Left ventricle myocardium superior (tissue), 1 donor: ENCODE measurements at regions of chr1 and their contacts with region 1.

Region 1: DNA sequence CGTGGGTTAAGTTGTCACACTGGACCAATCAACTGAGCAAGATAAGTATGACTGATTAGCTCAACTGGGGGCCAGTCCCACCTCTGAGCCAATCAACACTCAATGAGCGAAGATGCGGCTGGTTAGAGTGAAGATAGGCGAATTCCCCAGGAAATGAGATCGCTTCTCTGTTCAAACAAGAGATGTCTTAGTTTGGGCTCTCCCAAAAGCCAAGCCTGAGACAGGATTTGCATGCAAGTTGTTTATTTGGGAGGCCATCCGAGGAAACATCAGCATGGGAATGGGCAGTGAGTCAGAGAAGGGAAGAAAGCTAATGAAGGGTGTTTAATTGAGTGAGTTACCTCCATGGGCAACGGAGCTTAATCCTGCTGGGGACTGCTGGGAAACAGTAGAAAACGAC is 4.9 kb upstream of the GJB5 start:
- DNase-seq: no peak
- ATAC-seq: no peak

Region 2: DNA sequence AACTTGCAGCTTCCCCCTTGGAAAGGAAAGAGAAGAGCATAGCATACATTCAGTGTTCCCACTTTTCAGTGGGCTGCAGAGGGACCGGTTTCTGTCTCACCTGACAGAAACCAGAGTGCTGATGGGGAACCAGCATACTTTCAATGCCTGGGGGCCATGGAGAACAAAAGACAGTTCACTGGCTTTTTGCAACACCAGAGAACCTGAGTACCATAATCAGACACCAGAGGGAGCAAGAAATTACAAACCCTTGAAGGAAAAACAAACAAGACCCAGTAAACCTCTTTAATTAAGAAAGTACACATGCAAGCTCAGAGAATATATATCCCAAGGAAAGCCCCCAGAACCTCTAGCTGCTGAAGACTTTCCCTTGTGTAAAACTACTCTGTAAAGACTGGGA is 636.1 kb before region 1 on chr1:
- intact Hi-C with region 1: loop called (anchors 5 kb)
- DNase-seq: no peak
- ATAC-seq: no peak

Region 3: DNA sequence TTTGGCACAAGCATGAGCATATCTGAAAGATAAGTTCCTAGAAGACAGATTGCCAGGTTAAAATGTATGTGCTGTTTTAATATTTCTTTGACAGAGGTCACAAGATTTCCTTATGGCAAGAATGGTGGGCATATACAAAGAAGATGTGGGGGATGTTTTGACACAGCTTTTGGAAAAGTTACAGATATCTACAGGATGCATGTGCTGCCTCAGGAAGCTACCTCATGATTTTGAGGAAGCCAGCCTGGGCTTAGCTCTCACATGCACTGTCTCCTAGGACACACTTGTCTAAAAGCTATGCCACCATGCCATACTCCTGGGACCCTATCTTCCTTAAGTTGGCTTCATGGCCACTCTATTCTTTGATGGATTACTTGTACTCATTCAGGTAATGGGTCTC is 473.4 kb before region 1 on chr1:
- intact Hi-C with region 1: no loop called
- DNase-seq: no peak
- ATAC-seq: no peak

Region 4: DNA sequence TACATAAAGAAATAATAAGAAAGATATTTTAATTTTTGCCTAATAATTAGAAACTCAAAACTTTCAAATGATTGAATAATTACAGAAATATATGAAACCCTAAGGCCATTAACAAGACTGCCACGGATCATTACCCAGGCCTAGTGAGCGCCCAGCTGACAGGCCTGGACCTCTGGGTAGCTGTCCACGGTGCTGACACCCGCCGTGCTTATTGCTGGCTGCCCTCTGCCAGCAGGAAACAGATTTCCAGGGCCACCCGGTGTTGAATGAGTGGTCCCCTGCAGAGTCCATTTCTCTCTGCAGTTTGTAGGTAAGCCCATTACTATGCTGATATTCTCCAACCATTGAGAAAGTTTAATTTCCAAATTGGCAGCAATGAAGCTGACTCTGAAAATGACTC is 249.5 kb before region 1 on chr1:
- intact Hi-C with region 1: no loop called
- DNase-seq: peak; percentile 50
- ATAC-seq: no peak